ENCODE measurements at regions of chr17 and their contacts with region 1.

Region 1: DNA sequence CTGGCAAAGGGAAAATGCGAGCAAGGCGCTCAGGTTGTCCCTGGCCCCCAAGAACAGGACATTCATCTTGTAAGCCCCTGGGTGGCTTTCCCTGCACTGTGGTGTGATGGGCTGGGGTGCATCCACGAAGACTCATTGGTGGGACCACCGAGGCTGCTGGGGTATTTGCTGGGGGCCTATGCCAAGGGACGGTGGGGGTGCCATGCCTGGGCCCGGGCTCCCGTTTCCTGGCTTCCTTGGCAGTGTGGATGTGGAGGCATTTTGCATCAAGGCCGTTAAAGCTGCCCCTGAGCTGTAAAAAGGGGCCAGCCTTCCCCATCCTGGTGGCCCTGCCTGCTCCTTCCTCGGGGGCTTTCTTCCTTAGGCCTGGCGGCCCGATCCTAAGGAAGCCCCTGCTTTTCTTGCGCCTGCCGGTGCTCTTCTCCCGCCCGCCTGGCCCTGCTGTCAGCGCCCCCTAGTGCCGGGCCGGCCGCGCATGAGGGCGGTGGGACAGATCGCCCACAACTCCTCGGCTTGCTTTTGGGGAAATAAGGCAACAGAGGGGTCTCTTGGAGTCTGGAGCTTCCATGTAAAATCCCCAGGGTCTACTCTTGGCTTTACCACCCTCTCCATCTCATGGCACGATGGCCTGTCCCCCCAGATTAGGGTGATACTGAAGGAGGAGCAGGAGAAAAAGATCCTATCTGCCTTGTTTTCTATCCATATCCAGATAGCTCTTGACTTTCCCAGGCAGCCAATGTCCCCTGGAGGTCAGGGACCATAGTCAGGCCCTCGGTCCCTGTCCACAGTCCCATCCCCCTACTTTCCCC is 9.8 kb upstream of the TBX2 start:
- DNase-seq: peak in 2 of 6 donors; percentile 47 to 85
- ATAC-seq: peak; percentile 67 to 76 (median 70)
- H3K4me3 ChIP-seq: no peak overlapping the region
- H3K27ac ChIP-seq: no peak overlapping the region
- H3K4me1 ChIP-seq: peaks cover 0 to 3% (median 0%) of the 10 kb centered on the region in 3 donors
- H3K27me3 ChIP-seq: no peaks in the 10 kb centered on the region
- CTCF ChIP-seq: peak; percentile 57 to 74 (median 68)

Region 2: DNA sequence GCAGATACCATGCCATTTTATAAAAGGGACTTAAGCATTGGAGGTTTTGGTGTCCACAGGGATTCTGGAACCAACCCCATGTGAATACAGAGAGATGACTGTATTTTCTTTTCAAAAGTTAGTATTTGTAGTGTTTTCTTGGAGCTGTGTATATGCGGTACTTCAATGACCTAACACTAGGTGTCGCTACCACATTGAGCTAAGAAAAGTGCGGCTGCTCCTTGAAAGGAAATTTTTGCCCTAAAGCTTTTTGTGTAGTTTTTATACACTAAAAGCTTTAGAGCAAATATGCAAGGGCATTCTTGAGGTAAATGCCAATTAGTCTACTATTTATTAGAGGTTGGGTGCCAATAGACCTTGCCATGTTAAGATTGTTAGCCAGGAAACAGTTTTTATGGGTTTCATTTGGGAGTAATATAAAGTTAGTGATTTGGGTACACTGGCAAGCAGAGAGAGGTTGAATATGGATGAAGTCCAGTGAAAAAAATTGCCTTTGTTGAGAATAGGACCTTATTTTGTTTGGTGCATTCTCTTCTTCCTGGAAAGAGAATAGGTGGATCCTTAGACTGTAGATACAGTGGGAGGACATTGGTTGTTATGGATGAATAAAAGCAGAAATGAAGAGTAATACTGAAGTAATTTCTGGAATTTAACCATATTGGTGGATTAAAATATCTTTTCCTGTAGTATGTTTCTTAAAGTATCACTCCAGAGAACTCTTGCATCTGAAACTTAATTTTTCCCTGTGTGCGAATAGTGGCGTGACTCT is 668.9 kb before region 1 on chr17:
- intact Hi-C with region 1: loop called in 1 of 3 experiments (anchors 10 kb)
- DNase-seq: peak in 3 of 6 donors; percentile 4 to 36 (median 17)
- ATAC-seq: peak in 3 of 4 donors; percentile 74 to 81 (median 81)
- H3K4me3 ChIP-seq: no peak overlapping the region
- H3K27ac ChIP-seq: no peak overlapping the region
- H3K4me1 ChIP-seq: no peaks in the 10 kb centered on the region
- H3K27me3 ChIP-seq: no peaks in the 10 kb centered on the region
- CTCF ChIP-seq: peak; percentile 56 to 86 (median 79)

Region 3: GRCh38 chr17:61002316-61002736 is 387.5 kb before region 1 on chr17:
- intact Hi-C with region 1: loop called in 2 of 3 experiments (anchors 5 to 10 kb)
- DNase-seq: no peak
- ATAC-seq: peak in 3 of 4 donors; percentile 58 to 66 (median 63)
- H3K4me3 ChIP-seq: no peak overlapping the region
- H3K27ac ChIP-seq: no peak overlapping the region
- H3K4me1 ChIP-seq: no peaks in the 10 kb centered on the region
- H3K27me3 ChIP-seq: no peaks in the 10 kb centered on the region
- CTCF ChIP-seq: peak in 2 of 4 donors; percentile 18 to 23

Region 4: DNA sequence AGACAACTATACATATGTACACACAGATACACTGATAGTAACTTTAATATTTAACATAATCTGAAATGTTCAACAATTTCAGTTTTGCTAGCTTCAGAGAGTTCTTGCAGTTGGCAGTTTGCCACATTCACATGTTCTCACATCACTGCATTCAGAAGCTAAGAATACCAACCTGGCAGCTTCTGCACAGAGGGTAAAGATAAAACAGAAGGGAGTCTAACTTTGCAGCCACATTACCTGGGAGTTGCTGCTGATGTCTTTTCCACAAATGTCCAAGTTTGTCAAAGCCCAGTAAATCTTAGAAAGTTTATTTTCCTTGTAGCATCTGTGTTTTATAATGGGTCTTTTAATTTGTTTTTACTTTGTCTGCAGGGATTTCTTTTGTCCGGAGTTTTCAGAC is 380.2 kb before region 1 on chr17:
- intact Hi-C with region 1: loop called in 2 of 3 experiments (anchors 5 to 10 kb)
- DNase-seq: no peak
- ATAC-seq: no peak
- H3K4me3 ChIP-seq: no peak overlapping the region
- H3K27ac ChIP-seq: no peak overlapping the region
- H3K4me1 ChIP-seq: no peaks in the 10 kb centered on the region
- H3K27me3 ChIP-seq: no peaks in the 10 kb centered on the region
- CTCF ChIP-seq: no peak

Region 5: DNA sequence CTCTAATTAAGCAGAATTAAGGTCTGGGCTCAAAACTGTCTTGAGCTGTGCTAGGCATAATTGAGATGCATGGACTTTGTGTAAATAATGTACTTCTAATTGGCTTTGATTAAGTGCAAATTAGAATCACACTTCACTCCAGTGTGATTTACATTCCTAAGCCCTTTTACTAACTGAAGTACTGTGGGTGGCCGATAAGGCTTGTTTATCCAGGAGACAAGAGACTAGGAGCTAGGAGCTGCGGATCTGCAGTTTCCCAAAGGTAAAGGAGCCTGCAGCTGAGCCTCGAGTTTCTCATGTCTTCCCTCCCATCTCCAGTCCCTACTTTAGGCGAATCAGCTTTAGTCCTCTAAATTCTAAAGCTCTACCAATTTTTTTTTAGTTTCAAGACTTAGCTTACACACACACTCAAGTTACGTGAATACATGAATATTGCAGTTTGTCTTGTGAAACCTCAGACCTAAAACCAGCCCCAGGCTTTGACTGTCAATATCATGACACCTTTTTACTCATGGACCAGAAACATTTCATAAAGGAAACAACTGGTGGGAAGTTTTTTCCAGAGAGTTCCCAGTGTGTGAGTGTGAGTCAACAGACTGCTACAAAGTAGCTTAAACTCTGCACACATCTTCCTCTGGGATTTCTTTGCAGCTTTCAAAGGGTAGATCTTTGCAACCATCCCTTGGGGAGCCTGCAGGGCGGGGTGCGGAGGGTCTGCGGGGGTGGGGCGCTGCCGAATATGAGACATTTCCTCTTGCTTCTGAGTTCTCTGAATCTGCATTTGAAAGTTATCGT is 104.2 kb before region 1 on chr17:
- intact Hi-C with region 1: no loop called
- DNase-seq: no peak
- ATAC-seq: peak in 1 of 4 donors; percentile 46
- H3K4me3 ChIP-seq: no peak overlapping the region
- H3K27ac ChIP-seq: no peak overlapping the region
- H3K4me1 ChIP-seq: no peaks in the 10 kb centered on the region
- H3K27me3 ChIP-seq: no peaks in the 10 kb centered on the region
- CTCF ChIP-seq: no peak

Region 6: GRCh38 chr17:61338000-61338798 is 51.7 kb before region 1 on chr17:
- intact Hi-C with region 1: no loop called
- DNase-seq: no peak
- ATAC-seq: no peak
- H3K4me3 ChIP-seq: no peak overlapping the region
- H3K27ac ChIP-seq: no peak overlapping the region
- H3K4me1 ChIP-seq: peaks cover 7 to 15% (median 10%) of the 10 kb centered on the region in 3 donors
- H3K27me3 ChIP-seq: peaks cover 0 to 22% (median 0%) of the 10 kb centered on the region in 4 donors
- CTCF ChIP-seq: no peak